ENCODE measurements at regions of chr3 and their contacts with region 1.

Region 1: GRCh38 chr3:44510000-44510368 is 32.5 kb upstream of the ZNF445 start:
- DNase-seq: no peak
- ATAC-seq: peak; percentile 1 to 5

Region 2: GRCh38 chr3:44323341-44323955 is 186.5 kb before region 1 on chr3:
- intact Hi-C with region 1: loop called in 1 of 2 experiments (anchors 10 kb)
- DNase-seq: peak; percentile 76
- ATAC-seq: peak in 1 of 2 donors; percentile 31

Region 3: GRCh38 chr3:44338010-44338827 is 171.8 kb before region 1 on chr3 and contains the start of gene TCAIM:
- intact Hi-C with region 1: loop called in 1 of 2 experiments (anchors 10 kb)
- DNase-seq: peak; percentile 99
- ATAC-seq: peak; percentile 97 to 98
- total RNA-seq, gene TCAIM: 22.9 to 26.7 TPM

Region 4: GRCh38 chr3:44712455-44713075 is 202.6 kb after region 1 on chr3 and contains the start of gene ZNF502:
- intact Hi-C with region 1: no loop called
- DNase-seq: peak; percentile 92
- ATAC-seq: peak; percentile 99
- total RNA-seq, gene ZNF502: 3.4 to 4.4 TPM